Adrenal gland (tissue), 19 donors: ENCODE measurements at regions of chr18 and their contacts with region 1.

Region 1: GRCh38 chr18:74337155-74337911 is 21.7 kb downstream of the C18orf63 start:
- DNase-seq: no peak
- H3K4me3 ChIP-seq: no peak overlapping the region
- H3K27ac ChIP-seq: no peak overlapping the region
- H3K4me1 ChIP-seq: no peaks in the 10 kb centered on the region
- H3K27me3 ChIP-seq: no peaks in the 10 kb centered on the region
- CTCF ChIP-seq: no peak
- POLR2A ChIP-seq: no peak

Region 2: GRCh38 chr18:74204526-74205152 is 132.7 kb before region 1 on chr18:
- intact Hi-C with region 1: loop called in 1 of 2 experiments (anchors 5 kb)
- DNase-seq: peak in 1 of 7 donors; percentile 47
- H3K4me3 ChIP-seq: no peak overlapping the region
- H3K27ac ChIP-seq: no peak overlapping the region
- H3K4me1 ChIP-seq: no peaks in the 10 kb centered on the region
- H3K27me3 ChIP-seq: no peaks in the 10 kb centered on the region
- CTCF ChIP-seq: no peak
- POLR2A ChIP-seq: no peak

Region 3: GRCh38 chr18:74268933-74269620 is 68.3 kb before region 1 on chr18:
- intact Hi-C with region 1: no loop called
- DNase-seq: no peak
- H3K4me3 ChIP-seq: no peak overlapping the region
- H3K27ac ChIP-seq: no peak overlapping the region
- H3K4me1 ChIP-seq: no peaks in the 10 kb centered on the region
- H3K27me3 ChIP-seq: no peaks in the 10 kb centered on the region
- CTCF ChIP-seq: no peak
- POLR2A ChIP-seq: no peak

Region 4: GRCh38 chr18:74524097-74524496 is 186.8 kb after region 1 on chr18:
- intact Hi-C with region 1: no loop called
- DNase-seq: peak in 4 of 7 donors; percentile 30 to 62 (median 41)
- H3K4me3 ChIP-seq: no peak overlapping the region
- H3K27ac ChIP-seq: no peak overlapping the region
- H3K4me1 ChIP-seq: no peaks in the 10 kb centered on the region
- H3K27me3 ChIP-seq: no peaks in the 10 kb centered on the region
- CTCF ChIP-seq: no peak
- POLR2A ChIP-seq: no peak